Left ventricle myocardium inferior (tissue), 1 donor: ENCODE measurements at regions of chr3 and their contacts with region 1.

Region 1: DNA sequence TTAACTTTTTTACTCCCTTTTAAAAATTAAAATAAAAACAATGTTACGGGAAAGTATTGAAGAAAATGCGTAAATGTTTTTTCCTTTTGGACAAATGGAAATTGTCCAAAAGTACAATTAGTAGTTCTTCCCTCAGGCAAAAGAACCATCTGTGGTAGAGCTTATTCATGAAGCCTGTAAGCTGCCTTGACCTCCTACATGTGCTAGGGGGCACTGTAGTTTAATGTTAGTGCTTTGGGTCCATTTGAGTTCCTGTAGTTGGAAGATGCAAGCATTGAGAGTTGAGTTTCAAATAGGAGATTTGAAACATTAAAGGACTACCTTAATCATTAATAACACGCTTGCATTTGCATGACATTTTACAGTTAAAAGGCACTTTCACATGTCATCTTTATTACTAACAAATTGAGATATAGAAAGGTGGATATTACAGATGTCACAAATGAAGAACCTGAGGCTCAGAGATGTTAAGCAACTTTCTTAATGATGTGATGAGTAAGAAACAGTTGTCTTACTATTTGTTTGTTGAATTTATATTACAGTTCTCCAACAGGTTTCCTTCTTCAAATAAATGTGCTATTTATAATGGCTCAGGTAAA is 1.8 kb upstream of the ZNF385D start:
- DNase-seq: no peak
- H3K4me3 ChIP-seq: no peak overlapping the region
- H3K27ac ChIP-seq: peak overlapping the region; percentile 81
- H3K4me1 ChIP-seq: peaks cover 25% of the 10 kb centered on the region
- H3K27me3 ChIP-seq: peaks cover 3% of the 10 kb centered on the region
- CTCF ChIP-seq: peak; percentile 86

Region 2: DNA sequence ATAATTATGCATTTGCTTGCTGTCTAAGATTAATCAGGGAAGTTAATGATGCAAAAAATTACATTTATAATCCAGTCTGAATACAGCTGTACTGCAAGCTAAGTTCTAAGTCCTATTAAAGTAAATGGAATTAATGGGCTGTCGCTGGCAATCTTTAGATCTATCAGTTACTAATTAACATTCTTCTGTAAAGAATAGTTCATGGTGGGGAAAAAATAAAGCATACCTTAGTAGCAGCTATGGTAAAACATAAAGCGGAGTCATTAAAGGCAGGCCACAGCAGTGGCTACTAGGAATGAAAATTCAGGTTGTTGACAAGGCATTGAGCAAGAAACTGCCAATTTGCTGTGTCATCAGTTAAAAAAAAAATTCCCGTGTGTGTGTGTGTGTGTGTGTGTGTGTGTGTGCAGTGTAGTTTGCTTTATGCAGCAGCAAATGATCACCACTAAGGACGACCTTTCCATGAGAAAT is 131.6 kb before region 1 on chr3:
- intact Hi-C with region 1: no loop called
- DNase-seq: no peak
- H3K4me3 ChIP-seq: no peak overlapping the region
- H3K27ac ChIP-seq: no peak overlapping the region
- H3K4me1 ChIP-seq: peaks cover 16% of the 10 kb centered on the region
- H3K27me3 ChIP-seq: no peaks in the 10 kb centered on the region
- CTCF ChIP-seq: no peak

Region 3: DNA sequence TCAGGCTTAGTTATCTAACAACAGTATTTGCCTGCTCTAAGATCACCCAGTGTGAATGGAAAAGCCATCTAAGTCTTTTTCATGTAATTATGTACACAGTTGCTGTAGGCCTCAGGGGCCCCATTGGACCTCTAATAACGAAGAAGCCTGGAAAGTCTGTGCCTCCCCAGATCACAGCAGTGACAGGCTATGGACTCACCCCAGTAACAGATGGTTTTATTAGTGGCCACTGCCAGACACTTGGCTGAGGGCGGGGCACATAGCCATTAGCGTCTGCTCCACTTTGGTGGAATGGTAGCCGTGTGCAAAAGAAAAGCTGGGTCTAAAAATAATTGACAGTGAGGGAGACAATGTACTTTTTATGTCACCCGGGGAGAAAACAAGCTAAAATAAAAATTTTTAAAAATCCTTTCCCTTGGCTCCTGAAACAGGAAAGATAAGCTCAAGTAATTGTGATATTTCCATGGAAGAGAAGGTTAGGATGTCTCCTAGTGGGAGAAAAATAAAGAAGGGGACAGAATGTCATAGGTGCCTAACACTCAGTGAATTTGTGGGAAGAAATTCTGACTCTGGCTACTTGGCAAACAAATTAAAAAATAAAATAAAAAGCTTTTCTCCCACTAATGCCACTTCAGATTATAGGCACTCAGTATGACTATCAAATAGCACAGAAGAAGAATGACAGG is 42.4 kb after region 1 on chr3:
- intact Hi-C with region 1: loop called (anchors 5 kb)
- DNase-seq: peak; percentile 79
- H3K4me3 ChIP-seq: no peak overlapping the region
- H3K27ac ChIP-seq: peak overlapping the region; percentile 85
- H3K4me1 ChIP-seq: peaks cover 60% of the 10 kb centered on the region
- H3K27me3 ChIP-seq: no peaks in the 10 kb centered on the region
- CTCF ChIP-seq: peak; percentile 21

Region 4: DNA sequence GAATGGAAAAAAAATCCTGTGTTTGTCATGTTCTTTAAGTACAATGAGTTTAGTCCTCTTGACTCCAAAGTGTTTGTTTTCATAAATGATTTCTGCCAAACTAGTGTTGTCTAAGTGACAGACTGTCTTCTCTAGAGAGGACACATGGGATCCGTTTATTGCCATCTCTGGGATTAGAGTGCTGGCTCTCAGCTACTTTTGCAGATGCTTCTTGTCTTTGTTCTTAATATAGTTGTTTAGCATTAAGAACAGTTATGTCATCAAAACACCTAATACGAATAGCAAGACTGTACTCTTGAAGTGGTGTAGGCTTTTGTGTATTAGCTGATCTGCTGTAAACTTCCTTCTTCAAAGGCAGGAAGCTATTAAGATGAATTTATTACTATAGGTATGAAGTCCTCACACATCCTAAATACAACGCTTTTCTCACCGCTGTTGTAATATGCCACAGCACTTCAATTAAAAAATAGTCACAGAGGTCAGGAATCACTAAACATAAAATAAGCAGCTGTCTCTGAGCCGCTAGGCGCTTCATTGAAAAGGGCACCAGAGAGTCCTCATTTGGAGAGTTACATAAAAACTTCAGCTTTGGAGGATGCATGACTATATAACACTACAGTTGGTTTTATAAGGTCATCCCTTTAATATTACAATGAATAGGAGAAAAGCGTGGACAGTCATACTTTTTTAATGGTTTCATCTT is 126.5 kb after region 1 on chr3:
- intact Hi-C with region 1: no loop called
- DNase-seq: no peak
- H3K4me3 ChIP-seq: no peak overlapping the region
- H3K27ac ChIP-seq: no peak overlapping the region
- H3K4me1 ChIP-seq: no peaks in the 10 kb centered on the region
- H3K27me3 ChIP-seq: no peaks in the 10 kb centered on the region
- CTCF ChIP-seq: no peak

Region 5: GRCh38 chr3:21894459-21895340 is 141.9 kb after region 1 on chr3:
- intact Hi-C with region 1: loop called (anchors 2 kb)
- DNase-seq: no peak
- H3K4me3 ChIP-seq: no peak overlapping the region
- H3K27ac ChIP-seq: peak overlapping the region; percentile 11
- H3K4me1 ChIP-seq: peaks cover 9% of the 10 kb centered on the region
- H3K27me3 ChIP-seq: no peaks in the 10 kb centered on the region
- CTCF ChIP-seq: peak; percentile 85